Activated CD4-positive, alpha-beta T cell treated with anti-CD3 and anti-CD28 coated beads for 36 hours (primary cell): ENCODE measurements at regions of chr4 and their contacts with region 1.

Region 1: GRCh38 chr4:1899149-1900086 is 28.2 kb downstream of the NSD2 start:
- DNase-seq: peak; percentile 84
- ATAC-seq: peak; percentile 91
- H3K4me3 Mint-ChIP-seq: no peak overlapping the region
- H3K27ac Mint-ChIP-seq: peak overlapping the region; percentile 75
- H3K4me1 Mint-ChIP-seq: peaks cover 28% of the 10 kb centered on the region
- H3K27me3 Mint-ChIP-seq: no peaks in the 10 kb centered on the region

Region 2: DNA sequence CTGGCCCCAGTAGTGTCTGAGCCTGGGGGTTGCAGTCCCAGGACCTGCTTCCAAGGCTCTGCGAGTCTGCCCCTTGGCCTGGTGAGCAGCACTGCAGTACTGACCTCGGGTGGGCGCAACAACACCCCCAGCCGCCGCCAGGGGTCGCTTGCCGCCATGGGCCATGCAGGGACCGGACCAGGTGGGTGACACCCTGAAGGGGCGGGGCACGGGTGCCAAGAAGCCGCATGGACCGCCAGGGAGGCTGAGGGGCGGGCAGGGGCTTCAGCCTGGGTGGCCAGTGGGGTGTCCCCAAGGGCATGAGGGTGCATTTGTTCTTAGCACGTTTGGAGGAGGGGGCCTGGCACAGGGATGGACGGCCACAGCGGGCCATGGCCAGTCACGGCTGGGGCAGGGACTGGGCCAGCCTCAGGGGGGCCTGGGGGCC is 153.1 kb before region 1 on chr4:
- CTCF ChIA-PET with region 1: interaction called, 5 read pairs
- POLR2A ChIA-PET with region 1: no interaction called
- intact Hi-C with region 1: loop called (anchors 1 to 10 kb)
- DNase-seq: peak; percentile 88
- ATAC-seq: peak; percentile 72
- H3K4me3 Mint-ChIP-seq: no peak overlapping the region
- H3K27ac Mint-ChIP-seq: no peak overlapping the region
- H3K4me1 Mint-ChIP-seq: no peaks in the 10 kb centered on the region
- H3K27me3 Mint-ChIP-seq: no peaks in the 10 kb centered on the region

Region 3: DNA sequence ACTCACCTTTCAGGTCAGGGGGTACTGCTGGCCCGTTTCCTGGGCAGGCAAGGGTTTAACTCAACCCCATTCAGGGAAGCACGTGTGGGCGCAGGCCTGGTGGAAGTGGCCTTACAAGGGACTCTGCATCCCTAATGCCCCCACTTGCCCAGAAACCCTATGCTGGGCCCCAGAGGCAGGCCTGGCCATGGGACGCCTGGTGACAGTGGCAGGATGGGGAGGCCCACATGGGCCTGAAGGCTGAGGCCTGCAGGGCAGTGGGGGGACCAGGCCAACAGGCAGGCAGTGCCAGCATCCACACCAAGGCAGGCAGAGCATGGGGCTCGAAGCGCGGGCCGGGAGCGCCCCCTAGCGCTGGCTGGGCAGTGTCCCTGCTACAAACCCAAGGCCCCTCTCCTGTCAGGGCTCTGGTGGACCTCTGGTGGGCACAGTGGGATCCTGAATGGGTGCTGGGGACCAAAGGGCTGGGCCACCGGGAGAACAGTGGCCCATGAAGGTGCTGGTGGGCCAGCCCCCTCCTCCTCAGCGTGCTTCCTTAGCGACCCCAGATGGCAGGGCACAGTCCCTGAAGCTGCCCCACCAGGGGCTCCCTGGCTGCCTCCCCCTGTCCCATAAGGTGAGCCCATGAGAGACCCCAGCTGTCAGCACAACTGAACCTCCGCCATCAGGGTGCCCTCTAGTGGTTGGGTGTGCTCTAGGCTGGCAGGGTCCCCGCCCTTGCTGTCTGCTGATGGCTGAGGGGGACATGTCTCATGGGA is 89.5 kb before region 1 on chr4:
- CTCF ChIA-PET with region 1: interaction called, 4 read pairs
- POLR2A ChIA-PET with region 1: no interaction called
- intact Hi-C with region 1: loop called in 1 of 2 experiments (anchors 1 kb)
- DNase-seq: peak; percentile 88
- ATAC-seq: peak; percentile 93
- H3K4me3 Mint-ChIP-seq: no peak overlapping the region
- H3K27ac Mint-ChIP-seq: no peak overlapping the region
- H3K4me1 Mint-ChIP-seq: no peaks in the 10 kb centered on the region
- H3K27me3 Mint-ChIP-seq: no peaks in the 10 kb centered on the region

Region 4: DNA sequence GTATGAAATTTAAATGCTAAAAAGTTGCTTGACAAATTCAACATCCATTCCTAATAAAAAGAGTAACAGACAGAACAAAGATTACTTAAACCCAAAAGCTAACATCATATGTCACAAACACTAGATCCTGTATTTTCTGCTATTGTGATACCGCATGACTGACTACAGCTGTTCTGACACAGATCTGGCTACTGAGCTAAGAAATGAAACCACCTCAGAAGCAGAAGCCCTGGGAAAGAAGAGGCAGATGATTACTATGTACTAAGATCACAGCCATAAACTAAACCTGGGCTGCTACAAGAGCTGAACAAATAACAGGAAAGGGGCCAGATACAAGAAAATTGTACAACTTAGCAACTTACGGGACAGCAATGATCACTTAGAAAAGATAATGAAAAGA is 52.8 kb before region 1 on chr4:
- CTCF ChIA-PET with region 1: interaction called, 10 read pairs
- POLR2A ChIA-PET with region 1: no interaction called
- intact Hi-C with region 1: no loop called
- DNase-seq: no peak
- ATAC-seq: no peak
- H3K4me3 Mint-ChIP-seq: no peak overlapping the region
- H3K27ac Mint-ChIP-seq: no peak overlapping the region
- H3K4me1 Mint-ChIP-seq: peaks cover 13% of the 10 kb centered on the region
- H3K27me3 Mint-ChIP-seq: no peaks in the 10 kb centered on the region

Region 5: DNA sequence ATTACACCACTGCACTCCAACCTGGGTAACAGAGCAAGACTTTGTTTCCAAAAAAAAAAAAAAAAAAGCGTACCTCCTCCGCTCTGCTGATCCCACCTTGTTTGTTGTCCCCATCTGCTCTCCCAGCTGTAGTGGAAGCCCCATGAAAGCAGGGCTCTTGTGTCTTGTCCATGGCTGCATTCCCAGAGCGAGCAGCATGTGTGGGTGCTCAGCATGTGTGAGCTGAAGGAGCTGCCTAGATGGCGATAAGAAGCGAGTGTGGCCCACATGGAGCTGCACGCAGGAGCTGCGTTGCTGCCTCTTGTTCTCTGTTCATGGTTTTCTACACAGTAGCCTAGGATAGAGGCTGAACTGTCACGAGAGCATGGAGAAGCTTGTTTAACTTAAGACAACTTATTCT is 15.8 kb before region 1 on chr4:
- CTCF ChIA-PET with region 1: interaction called, 31 read pairs
- POLR2A ChIA-PET with region 1: no interaction called
- intact Hi-C with region 1: no loop called
- DNase-seq: no peak
- ATAC-seq: no peak
- H3K4me3 Mint-ChIP-seq: no peak overlapping the region
- H3K27ac Mint-ChIP-seq: no peak overlapping the region
- H3K4me1 Mint-ChIP-seq: peaks cover 28% of the 10 kb centered on the region
- H3K27me3 Mint-ChIP-seq: no peaks in the 10 kb centered on the region

Region 6: DNA sequence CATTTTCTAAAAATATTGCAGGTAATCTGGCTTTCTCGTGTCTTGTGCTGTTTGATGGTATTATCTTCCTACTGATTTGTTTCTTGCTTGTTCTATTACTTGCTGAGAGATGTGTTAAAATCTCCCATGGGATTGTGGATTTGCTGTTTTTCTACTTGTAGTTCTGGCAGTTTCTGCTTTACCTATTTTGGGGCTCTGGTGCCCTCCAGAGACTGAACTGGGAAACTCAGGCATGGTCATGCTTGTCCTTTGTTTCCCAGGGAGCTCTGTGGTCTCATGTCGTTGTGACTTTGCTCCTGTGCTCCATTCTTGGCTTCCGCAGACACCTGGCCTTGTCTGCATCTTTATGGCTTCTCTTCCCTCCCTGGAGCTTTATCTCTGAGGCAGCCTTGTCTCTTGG is 11.2 kb after region 1 on chr4:
- CTCF ChIA-PET with region 1: interaction called, 29 read pairs
- POLR2A ChIA-PET with region 1: no interaction called
- intact Hi-C with region 1: no loop called
- DNase-seq: peak; percentile 41
- ATAC-seq: no peak
- H3K4me3 Mint-ChIP-seq: no peak overlapping the region
- H3K27ac Mint-ChIP-seq: no peak overlapping the region
- H3K4me1 Mint-ChIP-seq: peaks cover 8% of the 10 kb centered on the region
- H3K27me3 Mint-ChIP-seq: no peaks in the 10 kb centered on the region

Region 7: GRCh38 chr4:1928356-1929239 is 29.2 kb after region 1 on chr4:
- CTCF ChIA-PET with region 1: interaction called, 10 read pairs
- POLR2A ChIA-PET with region 1: no interaction called
- intact Hi-C with region 1: no loop called
- DNase-seq: no peak
- ATAC-seq: peak; percentile 35
- H3K4me3 Mint-ChIP-seq: no peak overlapping the region
- H3K27ac Mint-ChIP-seq: peak overlapping the region; percentile 14
- H3K4me1 Mint-ChIP-seq: no peaks in the 10 kb centered on the region
- H3K27me3 Mint-ChIP-seq: no peaks in the 10 kb centered on the region

Region 8: DNA sequence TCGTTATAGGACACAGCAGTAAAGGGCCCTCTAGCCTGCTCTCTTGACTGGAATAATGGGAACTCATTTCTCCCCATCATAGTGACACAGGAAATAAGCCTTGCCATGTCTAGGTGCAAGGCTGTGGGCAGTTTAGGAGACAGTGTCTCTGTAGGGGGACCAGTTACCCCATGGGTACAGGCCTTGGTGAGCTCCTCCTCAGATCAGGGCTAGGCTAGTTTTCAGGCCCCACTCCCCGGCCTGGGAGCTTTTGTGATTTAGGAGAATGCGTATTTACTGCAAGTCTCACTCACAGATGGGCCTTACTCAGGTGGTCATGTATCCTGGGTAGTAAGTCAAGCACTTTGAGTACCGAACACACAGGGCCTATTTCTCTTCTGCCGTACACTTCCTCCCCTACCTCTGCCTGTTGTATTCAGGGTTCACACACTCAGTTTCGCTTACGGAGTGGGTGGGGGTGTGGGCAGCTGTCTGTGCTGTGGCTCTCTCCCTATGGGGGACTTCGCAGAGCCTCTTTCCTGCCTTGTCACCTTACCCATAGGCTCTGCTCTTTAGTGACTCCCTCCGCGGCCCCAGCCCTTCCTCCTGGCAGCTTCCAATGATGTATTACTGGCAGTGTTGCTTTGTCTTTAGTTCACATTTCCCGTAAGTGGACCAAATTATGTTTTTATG is 671.3 kb after region 1 on chr4:
- CTCF ChIA-PET with region 1: no interaction called
- POLR2A ChIA-PET with region 1: no interaction called
- intact Hi-C with region 1: no loop called
- DNase-seq: peak; percentile 85
- ATAC-seq: peak; percentile 99
- H3K4me3 Mint-ChIP-seq: peak overlapping the region; percentile 1
- H3K27ac Mint-ChIP-seq: peak overlapping the region; percentile 90
- H3K4me1 Mint-ChIP-seq: peaks cover 55% of the 10 kb centered on the region
- H3K27me3 Mint-ChIP-seq: no peaks in the 10 kb centered on the region